ENCODE measurements at regions of chr15 and their contacts with region 1.

Region 1: DNA sequence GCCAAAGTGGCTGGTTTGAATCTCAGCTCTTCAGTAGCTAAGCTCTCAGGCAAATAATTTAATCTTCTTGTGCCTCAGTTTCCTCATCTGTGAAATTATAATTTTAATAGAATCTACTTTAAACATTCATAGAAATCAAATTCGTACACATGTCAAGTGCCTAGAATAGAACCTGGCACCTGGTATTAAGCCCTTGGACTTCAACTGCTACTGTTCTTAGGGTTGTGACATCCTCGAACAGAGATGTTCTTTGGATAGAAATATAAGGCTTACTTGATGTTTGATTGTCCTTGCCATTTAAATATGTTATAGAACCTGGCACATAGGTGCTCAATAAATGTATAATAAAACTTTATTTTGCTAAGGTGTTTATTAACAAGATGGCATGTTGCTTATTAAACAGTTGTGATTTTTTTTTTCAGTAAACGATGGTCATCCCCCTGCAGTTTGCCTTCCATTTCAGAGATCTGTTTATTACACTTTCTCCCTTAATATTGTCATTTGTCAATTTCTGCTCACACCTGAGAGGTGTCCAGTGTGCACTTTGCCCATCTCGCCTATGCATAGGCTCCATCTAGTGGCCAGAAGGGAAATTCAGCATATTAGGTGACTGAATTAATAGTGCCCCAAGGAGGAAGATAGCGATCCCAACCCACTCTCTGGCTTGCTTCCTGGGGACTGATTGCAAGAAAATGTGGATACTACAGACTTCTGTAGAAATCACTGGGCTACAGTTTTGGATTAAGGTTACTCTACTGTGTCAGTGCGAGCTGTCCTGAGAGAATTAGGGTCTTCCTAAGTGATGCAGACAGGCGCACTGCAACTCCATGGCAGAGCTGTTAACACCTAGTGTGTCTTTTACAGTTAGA is 10.7 kb downstream of the IGF1R start:
- DNase-seq: peak in 1 of 5 donors; percentile 41
- H3K4me3 ChIP-seq: no peak overlapping the region
- H3K27ac ChIP-seq: no peak overlapping the region
- H3K4me1 ChIP-seq: peaks cover 37% of the 10 kb centered on the region
- H3K27me3 ChIP-seq: no peaks in the 10 kb centered on the region
- CTCF ChIP-seq: peak; percentile 61 to 78 (median 66)
- EP300 ChIP-seq: no peak
- POLR2A ChIP-seq: no peak

Region 2: DNA sequence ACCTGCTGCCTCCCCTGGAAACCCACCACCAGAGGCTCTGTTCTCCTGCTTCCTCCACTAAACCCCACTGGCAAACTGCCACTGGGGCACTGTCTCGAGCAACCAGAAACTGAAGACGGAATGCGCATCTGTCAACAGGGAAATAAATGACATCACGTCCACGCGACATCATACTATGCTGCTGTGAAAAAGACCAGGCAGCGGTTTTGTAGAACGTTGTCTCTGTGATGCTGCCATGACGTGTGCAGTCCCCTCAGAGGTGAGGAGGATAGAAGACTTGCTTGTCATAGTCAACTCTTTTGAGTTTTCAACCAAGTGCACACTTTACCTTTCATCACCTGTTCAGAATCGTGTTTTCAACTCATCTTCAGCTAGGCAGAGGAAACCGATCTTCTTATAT is 213.8 kb before region 1 on chr15:
- intact Hi-C with region 1: no loop called
- DNase-seq: no peak
- H3K4me3 ChIP-seq: no peak overlapping the region
- H3K27ac ChIP-seq: no peak overlapping the region
- H3K4me1 ChIP-seq: no peaks in the 10 kb centered on the region
- H3K27me3 ChIP-seq: no peaks in the 10 kb centered on the region
- CTCF ChIP-seq: no peak
- EP300 ChIP-seq: no peak
- POLR2A ChIP-seq: no peak

Region 3: GRCh38 chr15:98713585-98714001 is 54.5 kb after region 1 on chr15:
- intact Hi-C with region 1: loop called in 1 of 4 experiments (anchors 2 kb)
- DNase-seq: no peak
- H3K4me3 ChIP-seq: no peak overlapping the region
- H3K27ac ChIP-seq: no peak overlapping the region
- H3K4me1 ChIP-seq: peaks cover 36% of the 10 kb centered on the region
- H3K27me3 ChIP-seq: no peaks in the 10 kb centered on the region
- CTCF ChIP-seq: no peak
- EP300 ChIP-seq: no peak
- POLR2A ChIP-seq: no peak

Region 4: GRCh38 chr15:98779463-98780071 is 120.5 kb after region 1 on chr15:
- intact Hi-C with region 1: loop called in 2 of 4 experiments (anchors 5 to 10 kb)
- DNase-seq: peak; percentile 71 to 85 (median 82)
- H3K4me3 ChIP-seq: no peak overlapping the region
- H3K27ac ChIP-seq: no peak overlapping the region
- H3K4me1 ChIP-seq: peaks cover 15% of the 10 kb centered on the region
- H3K27me3 ChIP-seq: no peaks in the 10 kb centered on the region
- CTCF ChIP-seq: peak; percentile 53 to 72 (median 59)
- EP300 ChIP-seq: no peak
- POLR2A ChIP-seq: no peak

Region 5: DNA sequence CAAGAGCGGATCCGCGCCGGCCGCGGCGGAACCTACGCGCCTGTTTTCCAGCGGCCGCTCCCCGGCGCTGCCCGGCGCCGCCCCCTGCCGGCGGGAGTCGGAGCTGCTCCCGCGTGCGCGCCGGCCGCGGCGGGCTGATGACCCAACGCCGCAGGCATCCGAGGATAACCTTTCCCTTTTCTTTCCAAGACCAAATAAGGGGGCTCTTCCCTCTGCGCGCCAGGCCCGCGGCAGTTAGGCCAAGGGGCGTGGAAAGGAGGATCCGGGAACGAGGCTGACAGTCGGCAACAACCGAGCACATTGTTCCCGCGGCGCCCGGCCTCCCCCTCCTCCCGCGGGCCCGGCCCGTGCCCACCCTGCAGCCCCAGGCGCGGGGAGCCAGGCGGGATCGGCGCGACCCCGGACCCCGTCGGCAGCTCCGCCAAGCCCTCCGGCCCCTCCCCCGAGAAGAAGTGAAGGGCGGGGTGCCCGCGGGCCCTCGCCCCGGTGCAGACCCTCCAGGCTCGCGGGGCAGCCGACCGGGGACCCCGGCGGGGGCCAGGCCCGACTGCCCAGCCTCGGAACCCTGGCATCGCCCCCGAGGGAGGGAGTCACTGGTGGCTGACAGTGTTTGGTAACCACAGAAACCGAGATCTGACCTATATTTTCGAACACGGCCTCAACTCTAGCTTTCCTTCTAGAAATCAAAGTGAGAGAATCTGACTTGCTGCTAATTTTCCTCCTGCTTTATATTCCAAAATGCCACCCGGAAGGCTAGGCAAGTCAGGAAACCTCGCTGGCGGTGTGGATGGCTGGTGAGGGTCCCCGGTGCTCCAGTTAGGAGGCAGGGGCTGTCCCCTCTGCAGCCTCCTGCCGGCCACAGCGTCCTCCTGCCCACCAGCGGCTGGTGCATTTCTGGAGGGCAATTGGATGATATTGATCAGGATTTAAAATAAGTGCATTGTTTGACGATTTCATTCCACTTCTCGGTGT is 400.2 kb after region 1 on chr15:
- intact Hi-C with region 1: loop called in 3 of 4 experiments (anchors 10 kb)
- DNase-seq: peak; percentile 84 to 92 (median 89)
- H3K4me3 ChIP-seq: peak overlapping the region; percentile 37
- H3K27ac ChIP-seq: peak overlapping the region; percentile 72 to 81
- H3K4me1 ChIP-seq: no peaks in the 10 kb centered on the region
- H3K27me3 ChIP-seq: no peaks in the 10 kb centered on the region
- CTCF ChIP-seq: peak; percentile 71 to 93 (median 86)
- EP300 ChIP-seq: no peak
- POLR2A ChIP-seq: no peak

Region 6: GRCh38 chr15:99068186-99068585 is 409.1 kb after region 1 on chr15:
- intact Hi-C with region 1: loop called in 2 of 4 experiments (anchors 10 kb)
- DNase-seq: no peak
- H3K4me3 ChIP-seq: no peak overlapping the region
- H3K27ac ChIP-seq: no peak overlapping the region
- H3K4me1 ChIP-seq: no peaks in the 10 kb centered on the region
- H3K27me3 ChIP-seq: no peaks in the 10 kb centered on the region
- CTCF ChIP-seq: no peak
- EP300 ChIP-seq: no peak
- POLR2A ChIP-seq: no peak